Activated B cell treated with CpG ODN at 0.5 μM for 24 hours (primary cell): ENCODE measurements at regions of chr2 and their contacts with region 1.

Region 1: DNA sequence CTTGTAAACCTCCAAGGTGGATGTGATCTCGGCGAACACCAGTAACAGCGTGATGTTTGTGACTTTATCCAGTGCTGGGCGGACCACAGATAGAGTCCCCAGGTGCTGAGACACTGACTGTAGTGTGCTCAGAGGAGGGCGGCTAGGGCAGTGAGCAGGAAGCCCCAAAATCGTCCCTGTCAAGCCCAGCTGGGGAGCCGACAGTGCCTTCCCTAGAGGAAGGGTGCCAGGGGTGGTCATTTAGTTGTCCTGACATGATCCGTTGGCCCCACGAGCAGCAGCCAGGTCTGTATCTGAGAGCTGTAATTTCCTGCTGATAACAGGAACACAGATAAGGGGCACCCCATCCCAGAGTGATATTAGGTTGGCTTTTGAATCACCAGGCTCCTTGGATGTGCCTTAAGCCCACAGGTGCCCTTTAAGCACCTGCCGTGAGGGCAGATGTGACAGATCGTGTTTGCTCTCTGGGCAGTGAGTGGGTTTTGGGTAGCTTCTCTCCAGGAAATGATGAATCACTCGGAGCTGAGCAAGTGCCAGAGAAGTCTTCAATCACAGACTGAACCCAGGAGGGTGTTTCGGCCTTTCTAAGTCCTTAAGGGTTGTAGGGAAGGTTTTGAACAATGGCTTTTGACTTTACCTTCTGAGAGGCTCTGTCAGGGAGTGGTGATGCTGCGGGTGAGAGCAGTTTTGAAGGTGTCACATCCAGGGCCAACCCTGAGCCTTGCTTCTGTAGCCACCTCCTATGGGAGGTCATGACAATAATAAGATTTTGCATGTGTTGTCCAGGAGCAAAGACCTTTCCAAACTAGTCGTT is 7.7 kb downstream of the LPIN1 start:
- DNase-seq: peak; percentile 43
- ATAC-seq: peak; percentile 54
- H3K4me3 Mint-ChIP-seq: peak overlapping the region; percentile 82
- H3K27ac Mint-ChIP-seq: peak overlapping the region; percentile 96
- H3K4me1 Mint-ChIP-seq: peaks cover 90% of the 10 kb centered on the region
- H3K27me3 Mint-ChIP-seq: no peaks in the 10 kb centered on the region
- CTCF ChIP-seq: no peak

Region 2: GRCh38 chr2:11701751-11702301 is 52.3 kb before region 1 on chr2:
- CTCF ChIA-PET with region 1: no interaction called
- POLR2A ChIA-PET with region 1: no interaction called
- intact Hi-C with region 1: loop called (anchors 2 kb)
- DNase-seq: no peak
- ATAC-seq: peak; percentile 77
- H3K4me3 Mint-ChIP-seq: no peak overlapping the region
- H3K27ac Mint-ChIP-seq: no peak overlapping the region
- H3K4me1 Mint-ChIP-seq: no peaks in the 10 kb centered on the region
- H3K27me3 Mint-ChIP-seq: no peaks in the 10 kb centered on the region
- CTCF ChIP-seq: no peak

Region 3: DNA sequence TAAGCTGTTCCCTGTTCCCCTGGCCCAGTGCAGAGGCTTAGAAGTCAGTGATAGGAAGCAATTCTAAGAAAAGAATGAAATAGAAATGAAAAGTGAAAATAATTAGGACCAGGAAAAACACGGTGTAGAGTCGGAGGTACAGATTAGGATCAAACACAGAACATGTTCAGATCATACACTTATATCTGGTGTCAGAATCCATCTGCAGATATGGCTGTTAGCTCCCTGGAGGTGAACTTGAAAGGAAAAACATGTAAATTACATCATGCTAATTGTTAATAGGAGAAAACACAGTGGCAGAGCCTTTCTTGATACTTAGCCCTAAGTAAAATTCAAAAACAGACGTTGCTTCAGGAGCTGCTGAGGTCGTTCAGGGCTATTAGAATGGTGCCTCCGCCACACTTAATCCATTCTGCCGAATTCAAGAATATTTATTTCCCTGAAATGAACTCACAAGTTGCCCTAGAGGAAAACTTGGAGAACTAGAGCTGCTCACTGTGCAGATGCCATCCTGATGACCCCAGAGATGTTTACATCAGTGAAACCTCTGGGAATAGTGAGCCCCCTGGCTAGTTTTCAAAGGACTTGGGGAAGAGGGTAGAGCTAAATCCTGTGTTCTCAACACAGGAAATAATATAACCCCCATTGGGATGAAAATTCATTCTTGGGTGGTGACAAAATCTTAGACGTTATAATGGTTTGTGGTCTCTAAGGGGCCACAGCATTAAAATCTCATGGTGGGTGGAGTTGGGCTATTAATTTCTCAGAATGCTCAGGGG is 19.8 kb after region 1 on chr2:
- CTCF ChIA-PET with region 1: interaction called, 18 read pairs
- POLR2A ChIA-PET with region 1: interaction called, 16 read pairs
- intact Hi-C with region 1: loop called (anchors 1 kb)
- DNase-seq: no peak
- ATAC-seq: no peak
- H3K4me3 Mint-ChIP-seq: no peak overlapping the region
- H3K27ac Mint-ChIP-seq: peak overlapping the region; percentile 51
- H3K4me1 Mint-ChIP-seq: peaks cover 25% of the 10 kb centered on the region
- H3K27me3 Mint-ChIP-seq: no peaks in the 10 kb centered on the region
- CTCF ChIP-seq: no peak